A673 (cell line): ENCODE measurements at regions of chr2 and their contacts with region 1.

Region 1: GRCh38 chr2:189762551-189763298 is at the start of gene OSGEPL1:
- DNase-seq: peak; percentile 95
- H3K4me3 ChIP-seq: peak within 1 kb of the TSS; percentile 76
- H3K27ac ChIP-seq: peak within 1 kb of the TSS; percentile 85
- H3K4me1 ChIP-seq: peaks cover 10% of the 10 kb centered on the region
- H3K27me3 ChIP-seq: no peaks in the 10 kb centered on the region
- CTCF ChIP-seq: peak; percentile 79
- total RNA-seq, gene OSGEPL1: 13.1 and 13.7 TPM in 2 replicates

Region 2: DNA sequence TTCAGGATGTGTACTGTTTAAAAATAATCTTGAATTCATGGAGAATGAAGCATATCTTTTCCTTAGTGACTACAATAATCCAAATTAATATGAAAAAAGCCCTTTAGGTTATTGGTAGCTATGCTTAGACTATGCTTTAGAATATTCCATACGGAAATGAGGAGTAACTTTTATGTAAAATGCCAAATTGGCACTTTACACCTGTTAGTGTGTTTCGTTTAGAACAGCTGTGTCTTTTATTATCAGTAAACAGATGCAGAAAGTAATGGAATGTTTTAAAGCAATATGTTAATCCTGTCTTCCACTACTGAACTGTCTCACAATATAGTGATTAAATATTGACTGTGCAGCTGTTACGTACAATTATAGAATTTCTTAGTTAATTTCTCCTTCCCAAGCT is 151.1 kb after region 1 on chr2:
- CTCF ChIA-PET with region 1: no interaction called
- POLR2A ChIA-PET with region 1: interaction called, 14 read pairs
- intact Hi-C with region 1: no loop called
- DNase-seq: no peak
- H3K4me3 ChIP-seq: no peak overlapping the region
- H3K27ac ChIP-seq: no peak overlapping the region
- H3K4me1 ChIP-seq: no peaks in the 10 kb centered on the region
- H3K27me3 ChIP-seq: no peaks in the 10 kb centered on the region
- CTCF ChIP-seq: no peak